B cell (primary cell): ENCODE measurements at regions of chr3 and their contacts with region 1.

Region 1: DNA sequence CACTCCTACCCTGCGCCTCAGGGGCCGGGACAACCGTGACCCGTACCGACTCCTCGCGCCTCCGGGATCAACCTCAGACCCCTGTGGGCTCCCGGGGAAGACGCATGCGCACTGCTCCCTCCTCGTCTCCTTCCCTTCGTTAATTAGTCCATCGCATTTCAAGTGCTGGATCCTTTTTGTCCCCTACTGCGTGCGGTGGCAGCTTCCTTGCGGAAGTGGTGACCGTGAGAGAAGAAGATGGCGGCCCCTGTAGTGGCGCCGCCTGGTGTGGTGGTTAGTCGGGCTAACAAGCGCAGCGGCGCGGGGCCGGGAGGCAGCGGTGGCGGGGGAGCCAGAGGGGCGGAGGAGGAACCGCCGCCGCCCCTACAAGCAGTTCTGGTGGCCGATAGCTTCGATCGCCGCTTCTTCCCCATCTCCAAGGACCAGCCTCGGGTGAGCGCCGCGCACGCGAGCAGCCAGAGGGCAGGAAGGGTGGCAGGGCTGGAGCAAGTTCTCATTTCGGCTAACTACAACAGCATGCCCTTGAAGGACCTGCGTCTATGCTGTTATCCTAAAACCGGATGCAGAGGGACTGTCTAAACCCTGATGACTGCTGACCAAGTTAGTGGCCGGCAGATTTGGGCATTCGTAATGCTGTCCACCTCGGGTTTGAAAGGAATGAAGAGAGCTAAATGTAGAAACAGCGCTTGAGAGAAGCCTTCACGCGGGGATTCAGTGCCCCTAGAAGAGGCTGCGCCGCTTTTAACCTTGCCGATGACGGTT is at the start of gene EIF2B5:
- DNase-seq: peak; percentile 94
- ATAC-seq: peak; percentile 87
- H3K4me3 ChIP-seq: peak within 1 kb of the TSS; percentile 92 to 99 (median 95)
- H3K4me3 Mint-ChIP-seq: peak within 1 kb of the TSS; percentile 94
- H3K27ac ChIP-seq: peak within 1 kb of the TSS; percentile 78 to 86
- H3K27ac Mint-ChIP-seq: peak within 1 kb of the TSS; percentile 95
- H3K4me1 ChIP-seq: peaks cover 15 to 19% of the 10 kb centered on the region in 2 donors
- H3K4me1 Mint-ChIP-seq: peaks cover 37% of the 10 kb centered on the region
- H3K27me3 ChIP-seq: no peaks in the 10 kb centered on the region
- H3K27me3 Mint-ChIP-seq: no peaks in the 10 kb centered on the region
- CTCF ChIP-seq: peak; percentile 29
- total RNA-seq, gene EIF2B5: 83.8 and 85.9 TPM in 2 replicates

Region 2: GRCh38 chr3:183710231-183710630 is 425.1 kb before region 1 on chr3:
- CTCF ChIA-PET with region 1: no interaction called
- POLR2A ChIA-PET with region 1: no interaction called
- intact Hi-C with region 1: no loop called
- DNase-seq: no peak
- ATAC-seq: no peak
- H3K4me3 ChIP-seq: no peak overlapping the region
- H3K4me3 Mint-ChIP-seq: no peak overlapping the region
- H3K27ac ChIP-seq: no peak overlapping the region
- H3K27ac Mint-ChIP-seq: no peak overlapping the region
- H3K4me1 ChIP-seq: no peaks in the 10 kb centered on the region
- H3K4me1 Mint-ChIP-seq: peaks cover 11% of the 10 kb centered on the region
- H3K27me3 ChIP-seq: no peaks in the 10 kb centered on the region
- H3K27me3 Mint-ChIP-seq: no peaks in the 10 kb centered on the region
- CTCF ChIP-seq: no peak

Region 3: GRCh38 chr3:183895296-183895695 is 240.0 kb before region 1 on chr3:
- CTCF ChIA-PET with region 1: interaction called, 5 read pairs
- POLR2A ChIA-PET with region 1: no interaction called
- intact Hi-C with region 1: loop called (anchors 1 kb)
- DNase-seq: peak; percentile 73
- ATAC-seq: peak; percentile 96
- H3K4me3 ChIP-seq: no peak overlapping the region
- H3K4me3 Mint-ChIP-seq: no peak overlapping the region
- H3K27ac ChIP-seq: no peak overlapping the region
- H3K27ac Mint-ChIP-seq: no peak overlapping the region
- H3K4me1 ChIP-seq: peaks cover 0 to 2% of the 10 kb centered on the region in 2 donors
- H3K4me1 Mint-ChIP-seq: no peaks in the 10 kb centered on the region
- H3K27me3 ChIP-seq: peaks cover 0 to 9% (median 0%) of the 10 kb centered on the region in 4 experiments
- H3K27me3 Mint-ChIP-seq: peaks cover 37% of the 10 kb centered on the region
- CTCF ChIP-seq: peak; percentile 86

Region 4: DNA sequence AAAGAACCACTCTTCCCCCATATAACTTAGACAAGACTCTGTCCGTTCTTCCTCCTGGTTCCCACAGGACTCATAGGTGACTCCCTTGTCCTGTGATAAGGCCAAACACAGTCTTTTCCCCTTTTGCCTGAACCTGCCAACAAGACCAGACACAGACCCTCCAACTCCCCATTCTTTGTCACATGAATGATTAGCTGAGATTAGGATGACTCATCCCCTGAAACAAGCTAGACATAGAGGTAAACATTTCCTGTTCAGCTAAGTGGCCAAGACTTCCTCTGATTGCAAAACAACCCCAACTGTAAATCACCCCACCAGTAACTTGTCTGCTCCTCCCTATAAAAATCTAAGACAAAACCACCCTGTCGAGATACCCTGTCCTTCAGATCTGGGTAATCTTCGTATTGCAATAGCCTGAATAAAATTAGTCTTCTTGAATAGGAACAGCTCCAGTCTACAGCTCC is 49.9 kb before region 1 on chr3:
- CTCF ChIA-PET with region 1: interaction called, 4 read pairs
- POLR2A ChIA-PET with region 1: interaction called, 10 read pairs
- intact Hi-C with region 1: no loop called
- DNase-seq: no peak
- ATAC-seq: no peak
- H3K4me3 ChIP-seq: no peak overlapping the region
- H3K4me3 Mint-ChIP-seq: no peak overlapping the region
- H3K27ac ChIP-seq: no peak overlapping the region
- H3K27ac Mint-ChIP-seq: no peak overlapping the region
- H3K4me1 ChIP-seq: no peaks in the 10 kb centered on the region
- H3K4me1 Mint-ChIP-seq: peaks cover 6% of the 10 kb centered on the region
- H3K27me3 ChIP-seq: peaks cover 0 to 3% (median 0%) of the 10 kb centered on the region in 4 experiments
- H3K27me3 Mint-ChIP-seq: peaks cover 3% of the 10 kb centered on the region
- CTCF ChIP-seq: no peak

Region 5: DNA sequence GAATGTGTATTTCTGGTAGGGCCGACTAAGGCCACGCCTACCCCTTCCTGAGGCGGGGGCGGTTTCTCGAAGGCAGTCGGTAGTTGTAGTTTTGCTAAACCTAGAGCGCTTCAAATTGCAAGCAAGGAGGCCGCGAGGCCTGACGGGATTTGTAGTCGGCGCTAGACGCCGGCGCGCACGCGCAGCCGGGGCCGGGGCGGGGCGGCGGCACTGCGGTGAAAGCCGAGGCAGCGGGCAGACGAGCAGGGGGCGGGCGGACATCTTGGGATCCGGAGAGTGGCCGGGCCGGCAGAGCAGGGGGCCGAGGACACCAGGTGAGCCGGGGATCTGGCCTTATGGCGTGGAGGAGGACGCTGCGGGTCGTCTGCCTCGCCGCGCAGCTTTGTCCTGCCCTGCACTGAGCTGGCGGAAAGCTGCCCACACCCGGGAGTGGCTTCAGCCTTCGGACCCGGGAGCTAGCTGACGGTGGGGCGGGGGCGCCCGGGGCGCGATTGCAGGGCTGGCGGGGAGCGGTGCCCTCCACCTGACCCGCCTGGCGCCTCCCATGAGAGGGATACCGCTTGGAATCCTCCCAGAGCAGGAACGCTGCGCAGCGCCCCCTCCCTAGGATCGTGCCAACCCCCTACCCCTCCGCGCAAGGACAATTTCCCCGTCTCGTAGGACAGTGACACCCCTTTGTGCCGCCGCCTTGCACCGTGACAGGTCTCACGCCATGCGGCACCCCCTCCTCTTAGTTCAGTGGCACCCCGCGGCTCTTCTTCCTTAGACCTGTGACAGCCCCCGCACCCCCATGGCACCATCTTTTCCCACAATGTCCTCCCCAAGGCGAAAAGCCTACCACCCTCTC is 39.5 kb after region 1 on chr3 and contains the start of gene AP2M1:
- CTCF ChIA-PET with region 1: interaction called, 3 read pairs
- POLR2A ChIA-PET with region 1: interaction called, 4 read pairs
- intact Hi-C with region 1: loop called (anchors 1 kb)
- DNase-seq: peak; percentile 98
- ATAC-seq: peak; percentile 98
- H3K4me3 ChIP-seq: peak within 1 kb of the TSS; percentile 57 to 100 (median 98)
- H3K4me3 Mint-ChIP-seq: peak within 1 kb of the TSS; percentile 93
- H3K27ac ChIP-seq: peak within 1 kb of the TSS; percentile 56 to 80
- H3K27ac Mint-ChIP-seq: peak within 1 kb of the TSS; percentile 96
- H3K4me1 ChIP-seq: peaks cover 23 to 34% of the 10 kb centered on the region in 2 donors
- H3K4me1 Mint-ChIP-seq: peaks cover 37% of the 10 kb centered on the region
- H3K27me3 ChIP-seq: no peaks in the 10 kb centered on the region
- H3K27me3 Mint-ChIP-seq: no peaks in the 10 kb centered on the region
- CTCF ChIP-seq: no peak
- total RNA-seq, gene AP2M1: 191 and 207 TPM in 2 replicates

Region 6: DNA sequence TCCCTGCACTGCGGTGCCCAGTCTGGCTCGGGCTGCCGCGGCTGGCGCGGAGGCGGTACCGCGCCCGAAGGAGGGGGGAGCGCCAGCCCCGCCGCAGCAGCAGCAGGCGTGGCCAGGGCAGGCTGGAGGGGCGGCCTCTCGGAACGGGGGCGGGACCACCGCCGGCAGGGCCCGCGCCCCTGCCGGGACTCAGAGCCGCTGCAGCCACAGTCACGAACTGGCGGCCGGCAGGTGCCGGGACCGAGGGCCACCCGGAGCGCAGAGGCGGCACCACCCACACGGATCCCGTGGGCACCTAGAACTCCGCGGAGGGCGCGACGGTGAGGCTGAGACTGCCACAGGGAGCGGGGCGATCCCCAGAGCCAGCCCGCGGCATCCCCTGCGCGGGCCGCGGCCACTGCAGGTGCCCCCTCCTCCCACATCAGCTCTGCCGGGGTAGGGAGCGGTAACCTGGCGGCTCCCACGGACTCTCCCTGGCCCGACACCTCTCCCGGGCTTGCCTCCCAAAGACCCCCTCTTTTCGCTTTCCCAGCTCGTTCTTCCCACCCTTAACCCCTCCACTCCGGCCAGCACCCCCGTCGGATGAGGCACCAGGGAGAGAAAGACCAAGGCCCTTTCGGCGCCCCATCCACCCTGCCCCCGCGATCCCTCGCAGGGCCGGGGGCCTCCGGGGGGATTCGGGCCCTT is 94.2 kb after region 1 on chr3 and contains the start of gene VWA5B2:
- CTCF ChIA-PET with region 1: no interaction called
- POLR2A ChIA-PET with region 1: no interaction called
- intact Hi-C with region 1: loop called (anchors 5 kb)
- DNase-seq: peak; percentile 88
- ATAC-seq: peak; percentile 98
- H3K4me3 ChIP-seq: peak within 1 kb of the TSS; percentile 9 to 74 (median 59)
- H3K4me3 Mint-ChIP-seq: peak within 1 kb of the TSS; percentile 85
- H3K27ac ChIP-seq: no peak within 1 kb of the TSS
- H3K27ac Mint-ChIP-seq: no peak within 1 kb of the TSS
- H3K4me1 ChIP-seq: peaks cover 15 to 25% of the 10 kb centered on the region in 2 donors
- H3K4me1 Mint-ChIP-seq: peaks cover 20% of the 10 kb centered on the region
- H3K27me3 ChIP-seq: peaks cover 0 to 73% (median 39%) of the 10 kb centered on the region in 4 experiments
- H3K27me3 Mint-ChIP-seq: peaks cover 44% of the 10 kb centered on the region
- CTCF ChIP-seq: peak; percentile 37
- total RNA-seq, gene VWA5B2: 0.37 TPM in 1 of 2 replicates, not detected in the other

Region 7: GRCh38 chr3:184298759-184299496 is 163.6 kb after region 1 on chr3 and contains the start of gene PSMD2:
- CTCF ChIA-PET with region 1: no interaction called
- POLR2A ChIA-PET with region 1: no interaction called
- intact Hi-C with region 1: loop called (anchors 2 kb)
- DNase-seq: peak; percentile 96
- ATAC-seq: peak; percentile 95
- H3K4me3 ChIP-seq: peak within 1 kb of the TSS; percentile 63 to 92 (median 79)
- H3K4me3 Mint-ChIP-seq: peak within 1 kb of the TSS; percentile 95
- H3K27ac ChIP-seq: peak within 1 kb of the TSS; percentile 65 to 82
- H3K27ac Mint-ChIP-seq: peak within 1 kb of the TSS; percentile 91
- H3K4me1 ChIP-seq: peaks cover 12 to 17% of the 10 kb centered on the region in 2 donors
- H3K4me1 Mint-ChIP-seq: peaks cover 22% of the 10 kb centered on the region
- H3K27me3 ChIP-seq: peaks cover 0 to 2% (median 0%) of the 10 kb centered on the region in 4 experiments
- H3K27me3 Mint-ChIP-seq: peaks cover 6% of the 10 kb centered on the region
- CTCF ChIP-seq: no peak
- total RNA-seq, gene PSMD2: 140 and 145 TPM in 2 replicates

Region 8: GRCh38 chr3:184332370-184333090 is 197.2 kb after region 1 on chr3:
- CTCF ChIA-PET with region 1: no interaction called
- POLR2A ChIA-PET with region 1: no interaction called
- intact Hi-C with region 1: no loop called
- DNase-seq: no peak
- ATAC-seq: no peak
- H3K4me3 ChIP-seq: no peak overlapping the region
- H3K4me3 Mint-ChIP-seq: no peak overlapping the region
- H3K27ac ChIP-seq: peak overlapping the region in 1 of 2 donors; percentile 93
- H3K27ac Mint-ChIP-seq: no peak overlapping the region
- H3K4me1 ChIP-seq: peaks cover 14 to 17% of the 10 kb centered on the region in 2 donors
- H3K4me1 Mint-ChIP-seq: peaks cover 20% of the 10 kb centered on the region
- H3K27me3 ChIP-seq: no peaks in the 10 kb centered on the region
- H3K27me3 Mint-ChIP-seq: no peaks in the 10 kb centered on the region
- CTCF ChIP-seq: no peak